ENCODE measurements at regions of chr17 and their contacts with region 1.

Region 1: GRCh38 chr17:6640536-6641373 is at the starts of genes KIAA0753 and TXNDC17:
- DNase-seq: peak; percentile 75 to 96 (median 88)
- ATAC-seq: peak; percentile 85 to 87
- H3K4me3 Mint-ChIP-seq: peak within 1 kb of the TSS; percentile 87 to 99 (median 94)
- H3K27ac Mint-ChIP-seq: peak within 1 kb of the TSS; percentile 93 to 100 (median 98)
- H3K4me1 Mint-ChIP-seq: peaks cover 24 to 68% (median 58%) of the 10 kb centered on the region in 4 donors
- H3K27me3 Mint-ChIP-seq: no peaks in the 10 kb centered on the region
- polyA plus RNA-seq, gene KIAA0753: 1.2 to 2.3 (median 2.2) TPM
- polyA plus RNA-seq, gene TXNDC17: 48.7 to 73.5 (median 60.3) TPM

Region 2: DNA sequence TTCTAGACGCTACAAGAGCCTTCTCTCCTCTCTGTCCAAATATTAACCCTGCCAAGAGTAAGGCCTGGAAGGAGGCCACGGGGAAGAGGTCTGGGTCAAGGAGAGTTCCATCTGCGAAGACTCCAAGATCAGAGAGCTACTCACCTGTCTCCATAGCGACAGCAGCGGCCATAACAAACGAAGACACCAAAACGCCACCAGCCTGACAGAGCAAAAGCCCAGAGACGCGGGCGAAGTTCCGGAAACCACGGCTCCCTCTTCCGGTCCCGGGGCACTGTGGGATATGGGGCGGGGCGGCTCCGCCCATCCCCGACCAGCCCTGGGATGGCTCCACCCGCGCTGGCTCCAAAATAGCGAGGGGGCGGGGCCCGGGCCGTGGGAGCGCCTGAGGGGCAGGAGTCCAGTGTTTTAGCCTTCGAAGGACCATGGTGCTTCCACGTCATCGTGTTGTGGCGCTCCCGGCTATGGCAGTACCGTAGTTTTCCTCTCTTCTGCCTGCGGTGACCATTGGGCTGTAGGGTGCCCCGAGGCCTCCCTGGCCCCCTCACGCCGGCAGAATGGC is 10.7 kb after region 1 on chr17 and contains the starts of genes C17orf100 and MED31:
- POLR2A ChIA-PET with region 1: interaction called, 41 read pairs
- DNase-seq: peak; percentile 87 to 96 (median 93)
- ATAC-seq: peak; percentile 83 to 86
- H3K4me3 Mint-ChIP-seq: peak within 1 kb of the TSS; percentile 95 to 100 (median 98)
- H3K27ac Mint-ChIP-seq: peak within 1 kb of the TSS; percentile 98 to 100 (median 99)
- H3K4me1 Mint-ChIP-seq: peaks cover 22 to 81% (median 72%) of the 10 kb centered on the region in 4 donors
- H3K27me3 Mint-ChIP-seq: peaks cover 0 to 15% (median 0%) of the 10 kb centered on the region in 5 donors
- polyA plus RNA-seq, gene C17orf100: 2.2 to 6.4 (median 5.8) TPM
- polyA plus RNA-seq, gene MED31: 25.2 to 30.7 (median 28.6) TPM

Region 3: GRCh38 chr17:6657633-6658287 is 17.0 kb after region 1 on chr17:
- POLR2A ChIA-PET with region 1: interaction called, 15 read pairs
- DNase-seq: no peak
- ATAC-seq: no peak
- H3K4me3 Mint-ChIP-seq: peak overlapping the region; percentile 85 to 97 (median 92)
- H3K27ac Mint-ChIP-seq: peak overlapping the region; percentile 77 to 96 (median 92)
- H3K4me1 Mint-ChIP-seq: peaks cover 33 to 72% (median 61%) of the 10 kb centered on the region in 4 donors
- H3K27me3 Mint-ChIP-seq: peaks cover 0 to 15% (median 0%) of the 10 kb centered on the region in 5 donors

Region 4: GRCh38 chr17:6669479-6670212 is 28.9 kb after region 1 on chr17:
- POLR2A ChIA-PET with region 1: no interaction called
- DNase-seq: no peak
- ATAC-seq: no peak
- H3K4me3 Mint-ChIP-seq: no peak overlapping the region
- H3K27ac Mint-ChIP-seq: peak overlapping the region in 2 of 10 donors; percentile 32 to 43
- H3K4me1 Mint-ChIP-seq: peaks cover 8 to 17% (median 15%) of the 10 kb centered on the region in 4 donors
- H3K27me3 Mint-ChIP-seq: no peaks in the 10 kb centered on the region

Measured in naive thymus-derived CD8-positive, alpha-beta T cell (primary cell).